Activated T-helper 2 cell treated with anti-CD3 and anti-CD28 coated beads, Interferon-gamma antibody, Interleukin-2, Interleukin-4, amounts not matched to agents 10 μg/mL and 5 μg/mL and 100 μg/mL, durations not matched to agents 14 hours and 24 hours and 36 hours (primary cell): ENCODE measurements at regions of chr13 and their contacts with region 1.

Region 1: GRCh38 chr13:91406619-91407018 is 8.2 kb downstream of the GPC5 start:
- DNase-seq: no peak
- H3K4me3 Mint-ChIP-seq: no peak overlapping the region
- H3K27ac Mint-ChIP-seq: no peak overlapping the region
- H3K4me1 Mint-ChIP-seq: no peaks in the 10 kb centered on the region
- H3K27me3 Mint-ChIP-seq: peaks cover 38% of the 10 kb centered on the region

Region 2: GRCh38 chr13:90315061-90315460 is 1091.6 kb before region 1 on chr13:
- intact Hi-C with region 1: no loop called
- DNase-seq: no peak
- H3K4me3 Mint-ChIP-seq: no peak overlapping the region
- H3K27ac Mint-ChIP-seq: no peak overlapping the region
- H3K4me1 Mint-ChIP-seq: no peaks in the 10 kb centered on the region
- H3K27me3 Mint-ChIP-seq: no peaks in the 10 kb centered on the region

Region 3: DNA sequence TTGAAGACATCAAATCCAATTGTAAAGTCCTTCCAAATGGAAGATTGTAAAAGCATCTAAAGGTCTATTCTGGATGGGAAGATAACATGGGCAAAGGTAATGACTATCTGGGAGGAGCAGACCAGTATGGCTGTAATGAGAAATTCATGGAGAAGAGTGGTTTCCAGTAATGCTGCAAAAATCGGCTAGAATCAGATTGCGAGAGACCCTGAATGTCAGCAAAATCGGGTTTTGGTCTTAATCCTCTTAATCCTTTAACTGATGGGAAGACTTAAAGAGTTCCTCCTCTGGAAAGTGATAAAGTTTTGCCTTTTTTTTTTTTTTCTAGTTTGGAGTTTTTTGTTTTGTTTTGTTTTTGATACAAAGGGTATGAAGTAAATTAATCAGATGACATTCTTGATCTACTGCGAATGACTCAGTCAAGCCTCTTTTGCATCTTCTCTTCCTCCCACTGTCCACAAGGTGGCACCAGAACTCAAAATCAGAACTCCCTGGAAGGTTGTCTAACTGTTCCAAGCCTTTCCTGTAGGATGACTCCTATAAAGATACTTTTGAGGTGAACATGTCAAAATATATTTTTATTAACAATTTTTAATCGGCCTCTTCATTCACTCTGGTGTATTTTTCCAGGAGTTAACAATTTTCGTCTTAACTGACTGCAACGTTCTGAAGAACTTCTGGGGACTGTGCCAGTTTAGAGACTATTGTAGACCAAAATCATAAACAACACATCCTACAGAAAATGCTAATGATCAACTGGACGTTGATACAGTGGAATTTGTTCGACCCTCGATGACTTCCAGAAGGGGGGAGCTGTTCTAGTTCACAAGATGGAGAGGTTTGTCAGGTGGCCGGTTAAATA is 272.4 kb before region 1 on chr13:
- intact Hi-C with region 1: loop called (anchors 2 kb)
- DNase-seq: no peak
- H3K4me3 Mint-ChIP-seq: no peak overlapping the region
- H3K27ac Mint-ChIP-seq: no peak overlapping the region
- H3K4me1 Mint-ChIP-seq: no peaks in the 10 kb centered on the region
- H3K27me3 Mint-ChIP-seq: no peaks in the 10 kb centered on the region

Region 4: GRCh38 chr13:91313103-91313502 is 93.5 kb before region 1 on chr13:
- intact Hi-C with region 1: loop called (anchors 1 kb)
- DNase-seq: no peak
- H3K4me3 Mint-ChIP-seq: no peak overlapping the region
- H3K27ac Mint-ChIP-seq: no peak overlapping the region
- H3K4me1 Mint-ChIP-seq: peaks cover 9% of the 10 kb centered on the region
- H3K27me3 Mint-ChIP-seq: peaks cover 14% of the 10 kb centered on the region

Region 5: DNA sequence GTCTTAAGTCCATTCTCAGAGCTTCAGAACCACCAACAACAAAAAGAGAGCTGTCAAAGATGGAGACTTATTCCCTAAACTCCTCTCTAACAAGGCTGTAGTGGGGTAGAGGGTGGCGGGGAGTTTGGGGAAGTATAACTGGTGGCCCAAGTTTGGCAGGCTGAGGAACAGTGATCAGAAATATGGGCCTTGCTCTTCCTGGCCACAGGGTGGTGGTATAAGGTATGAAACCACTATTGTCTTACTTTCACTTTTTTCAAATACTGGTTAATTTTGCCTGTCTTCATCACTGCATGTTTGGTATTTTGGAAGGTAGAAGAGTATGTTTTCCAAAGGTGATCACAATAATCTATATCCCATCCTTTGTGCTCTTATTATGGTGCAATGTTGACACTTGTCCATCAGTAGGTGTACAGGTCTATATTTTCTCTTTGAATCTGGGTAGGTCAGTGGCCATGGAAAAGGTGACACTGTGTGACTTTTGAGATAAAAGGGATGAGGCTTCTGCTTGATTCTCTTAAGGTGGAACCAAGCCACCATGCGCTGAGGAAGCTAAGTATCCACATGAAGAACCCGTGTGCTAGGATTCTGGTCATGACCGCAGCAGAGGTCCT is 31.4 kb before region 1 on chr13:
- intact Hi-C with region 1: loop called (anchors 2 kb)
- DNase-seq: no peak
- H3K4me3 Mint-ChIP-seq: no peak overlapping the region
- H3K27ac Mint-ChIP-seq: no peak overlapping the region
- H3K4me1 Mint-ChIP-seq: peaks cover 6% of the 10 kb centered on the region
- H3K27me3 Mint-ChIP-seq: peaks cover 11% of the 10 kb centered on the region